AG04449 (cell line): ENCODE measurements at regions of chr11 and their contacts with region 1.

Region 1: DNA sequence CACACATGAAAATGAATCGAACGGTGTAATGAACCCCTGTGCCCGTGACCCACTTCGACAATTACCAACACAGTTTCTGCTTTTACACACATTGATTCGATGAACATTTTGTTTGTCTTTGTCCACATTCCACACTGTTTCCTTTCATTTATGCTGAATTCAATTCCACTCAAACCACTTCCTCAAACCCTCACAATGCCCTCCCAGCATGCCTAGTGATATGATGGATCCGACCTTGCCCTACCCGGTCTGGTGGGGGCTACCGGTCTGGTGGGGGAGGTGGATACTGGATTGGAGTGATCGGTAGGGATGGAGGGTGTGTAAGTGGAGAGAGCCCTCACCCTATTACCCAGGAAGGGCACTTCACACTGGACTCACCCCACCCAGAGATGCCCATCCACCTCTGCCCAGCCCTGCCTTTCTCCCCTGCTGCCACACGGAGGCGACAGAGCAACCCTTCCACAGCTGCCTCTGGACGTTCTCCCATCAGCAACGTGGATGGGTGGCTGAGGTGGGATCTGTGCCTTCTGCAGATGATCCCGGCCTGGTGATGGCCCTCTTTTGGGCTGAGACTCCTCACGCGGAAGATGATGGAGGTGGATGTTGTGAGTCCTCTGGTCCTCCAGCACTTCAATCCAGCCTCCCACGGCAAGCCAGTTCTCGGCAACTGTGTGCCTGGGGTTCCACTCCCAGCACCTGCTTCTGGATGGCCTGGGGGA is 33.0 kb upstream of the P2RY2 start:
- DNase-seq: no peak
- H3K4me3 ChIP-seq: no peak overlapping the region
- CTCF ChIP-seq: peak; percentile 96

Region 2: DNA sequence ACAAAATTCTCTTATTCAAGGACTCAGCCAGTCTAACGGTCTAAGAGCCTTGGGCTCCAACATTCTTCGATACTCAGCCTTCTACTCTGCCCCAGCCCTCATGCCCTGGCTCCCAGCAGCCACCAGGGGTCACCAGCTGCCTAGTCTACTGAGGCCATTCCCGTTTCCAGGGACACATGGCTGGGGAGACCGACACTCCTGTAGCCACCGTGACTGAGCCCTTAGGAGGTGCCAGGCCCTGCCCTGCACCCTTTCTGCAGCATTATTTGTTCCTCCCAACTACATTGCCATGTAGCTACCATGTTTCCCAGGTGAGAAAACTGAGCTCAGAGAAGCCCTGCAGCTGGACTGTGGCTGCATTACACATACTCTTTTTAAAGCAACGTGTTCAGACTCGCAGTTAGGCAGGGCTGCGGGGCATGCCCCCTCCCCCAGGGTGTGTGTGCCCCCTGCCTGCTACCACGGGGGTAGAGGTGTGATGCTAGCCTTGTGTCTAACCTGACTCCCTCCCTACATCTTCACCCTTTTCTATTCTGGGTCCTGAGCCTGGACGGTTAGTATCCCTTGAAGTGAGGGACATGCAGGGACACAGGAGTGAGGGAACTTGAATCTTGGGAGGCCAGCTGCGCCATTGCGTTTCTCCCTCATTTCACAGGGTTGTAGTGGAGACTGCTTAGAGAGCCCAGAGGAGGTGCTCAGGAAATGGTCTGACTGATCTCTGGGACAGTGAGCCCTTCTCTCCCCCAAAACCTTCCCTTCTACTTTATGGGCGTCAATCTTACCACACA is 353.4 kb before region 1 on chr11:
- CTCF ChIA-PET with region 1: interaction called, 324 read pairs
- POLR2A ChIA-PET with region 1: no interaction called
- DNase-seq: no peak
- H3K4me3 ChIP-seq: no peak overlapping the region
- CTCF ChIP-seq: peak; percentile 97

Region 3: DNA sequence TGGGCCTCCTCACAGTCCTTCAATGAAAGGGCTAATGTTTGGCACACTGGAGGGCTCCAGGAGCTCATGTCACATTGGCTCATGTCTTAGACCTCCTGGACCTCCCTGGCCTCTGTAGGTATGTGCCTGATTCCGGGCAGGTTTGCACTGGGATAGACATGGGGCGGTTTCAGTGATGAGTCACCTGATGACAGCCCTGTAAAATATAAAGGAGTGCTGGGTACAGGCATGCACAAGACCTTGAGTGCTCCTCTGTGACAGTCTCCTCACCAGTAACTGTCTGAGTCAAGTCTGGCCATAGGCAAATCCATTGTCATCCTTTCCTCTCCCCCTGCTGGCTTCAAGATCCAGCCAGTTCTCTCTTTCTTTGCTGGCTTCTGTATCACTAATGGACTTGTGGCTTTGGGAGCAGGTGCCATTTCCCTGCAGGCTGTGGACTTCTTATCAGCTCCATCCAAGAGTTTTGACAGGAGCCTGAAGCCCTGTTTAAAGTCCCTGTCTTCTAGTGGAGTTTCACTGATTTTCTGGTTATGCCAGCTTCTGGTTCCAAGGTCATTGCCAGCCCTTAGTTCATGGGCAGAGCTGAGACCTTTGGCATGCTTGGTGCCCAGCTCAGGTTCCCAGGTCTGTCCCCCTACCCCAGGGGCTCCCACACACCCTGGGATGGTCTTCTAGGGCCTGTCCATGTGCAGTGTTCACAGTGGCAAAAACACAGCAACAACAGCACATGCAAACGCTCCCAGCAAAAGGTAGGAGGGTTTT is 10.3 kb after region 1 on chr11:
- CTCF ChIA-PET with region 1: interaction called, 13 read pairs
- POLR2A ChIA-PET with region 1: no interaction called
- DNase-seq: no peak
- H3K4me3 ChIP-seq: no peak overlapping the region
- CTCF ChIP-seq: no peak

Region 4: DNA sequence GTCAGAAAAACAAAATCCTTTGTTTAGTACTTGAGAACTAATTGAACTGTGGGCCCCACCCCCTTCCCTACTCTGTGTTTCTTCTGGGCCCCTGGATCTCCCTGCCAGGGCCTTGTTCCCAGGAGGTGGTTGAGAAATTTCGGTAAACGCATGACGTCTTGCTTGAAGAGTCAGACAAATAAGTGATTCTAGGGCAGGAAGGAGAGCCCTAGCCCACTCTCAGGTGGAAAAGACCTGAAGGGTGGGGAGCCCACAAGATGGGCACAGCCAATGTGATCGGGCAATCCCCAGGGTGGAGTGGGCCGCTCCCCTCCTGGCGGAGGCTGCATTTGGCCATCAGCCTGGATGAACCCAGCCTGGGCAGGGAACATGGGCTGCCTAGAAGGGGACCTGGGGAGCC is 16.1 kb after region 1 on chr11:
- CTCF ChIA-PET with region 1: interaction called, 10 read pairs
- POLR2A ChIA-PET with region 1: no interaction called
- DNase-seq: no peak
- H3K4me3 ChIP-seq: no peak overlapping the region
- CTCF ChIP-seq: no peak

Region 5: DNA sequence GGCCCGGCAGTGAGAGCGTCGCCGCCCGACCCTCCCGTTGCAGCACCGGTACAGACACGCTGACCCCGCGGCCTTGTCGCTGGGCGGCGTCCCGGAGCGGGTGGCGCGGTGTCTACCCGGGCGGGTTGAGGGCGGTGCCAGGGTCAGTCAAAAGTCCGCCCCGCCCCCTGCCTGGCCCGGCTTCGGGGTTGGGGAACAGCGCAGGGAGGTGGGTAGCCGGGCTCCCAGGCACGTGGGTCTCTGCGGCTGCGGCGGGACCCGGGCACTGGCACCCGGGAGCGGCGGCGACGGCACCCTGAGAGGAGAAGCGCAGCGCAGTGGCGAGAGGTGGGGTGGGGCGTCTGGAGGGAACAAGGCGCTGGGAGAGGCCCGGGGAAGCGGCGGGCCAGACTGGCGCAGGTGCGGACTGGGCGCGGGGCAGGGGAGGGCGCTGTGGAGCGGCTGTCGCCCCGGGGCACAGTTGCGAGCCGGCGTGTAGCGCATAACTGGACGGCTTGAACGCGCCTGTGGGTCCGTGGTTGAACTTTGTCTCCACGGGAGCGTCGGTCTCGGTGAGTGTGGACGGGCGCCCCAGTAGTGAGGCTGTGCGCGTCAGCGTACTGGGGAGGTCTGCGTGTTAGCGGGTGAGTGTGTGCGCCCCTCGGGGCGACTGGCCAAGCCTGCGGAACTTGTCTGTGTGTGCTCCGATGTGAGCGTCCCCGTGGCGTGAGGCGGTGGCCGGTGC is 33.2 kb after region 1 on chr11 and contains the start of gene P2RY2:
- CTCF ChIA-PET with region 1: interaction called, 10 read pairs
- POLR2A ChIA-PET with region 1: no interaction called
- DNase-seq: no peak
- H3K4me3 ChIP-seq: peak within 1 kb of the TSS; percentile 44
- CTCF ChIP-seq: peak; percentile 62

Region 6: DNA sequence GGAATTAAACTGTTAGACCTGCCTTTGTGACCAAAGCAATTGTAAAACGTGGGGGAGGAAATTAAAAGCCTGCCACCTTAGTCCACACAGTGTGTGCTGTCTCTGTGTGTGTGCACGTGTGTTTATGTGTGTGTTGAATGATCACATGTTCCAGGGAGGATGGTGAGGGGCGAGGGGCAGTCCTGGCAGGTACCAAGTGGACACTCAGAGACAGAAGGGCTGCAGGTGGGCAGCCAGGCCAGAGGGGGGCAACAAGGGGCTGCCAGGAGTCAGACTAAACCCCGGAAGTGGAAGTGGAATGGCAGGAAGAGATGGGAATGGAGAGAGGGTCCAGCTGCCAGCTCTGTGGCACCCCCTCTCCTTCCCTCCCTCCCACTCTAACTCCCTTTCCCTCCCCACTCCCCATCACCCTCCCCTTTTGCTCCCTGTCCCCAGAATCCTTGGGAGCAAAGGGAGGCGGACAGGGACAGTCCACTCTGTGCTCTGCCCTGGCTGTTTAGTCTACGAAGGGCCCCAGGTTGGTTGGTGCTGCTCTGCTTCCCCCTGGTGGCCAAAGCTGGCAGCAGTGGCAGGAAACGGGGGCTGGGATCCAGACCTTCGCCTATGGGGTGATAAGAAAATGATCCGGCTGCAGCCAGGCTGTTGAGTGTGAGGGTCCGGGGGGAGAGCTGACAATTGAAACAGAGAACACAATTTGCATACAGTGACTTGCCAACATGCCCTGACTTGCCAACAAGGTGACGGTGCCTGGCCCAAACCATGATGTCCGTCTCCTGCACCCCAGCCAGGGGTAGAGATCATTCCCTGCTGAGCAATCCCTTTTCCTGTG is 57.4 kb after region 1 on chr11:
- CTCF ChIA-PET with region 1: interaction called, 210 read pairs
- POLR2A ChIA-PET with region 1: no interaction called
- DNase-seq: no peak
- H3K4me3 ChIP-seq: peak overlapping the region; percentile 13; the same call in 1 of the 2 replicates
- CTCF ChIP-seq: peak; percentile 94

Region 7: DNA sequence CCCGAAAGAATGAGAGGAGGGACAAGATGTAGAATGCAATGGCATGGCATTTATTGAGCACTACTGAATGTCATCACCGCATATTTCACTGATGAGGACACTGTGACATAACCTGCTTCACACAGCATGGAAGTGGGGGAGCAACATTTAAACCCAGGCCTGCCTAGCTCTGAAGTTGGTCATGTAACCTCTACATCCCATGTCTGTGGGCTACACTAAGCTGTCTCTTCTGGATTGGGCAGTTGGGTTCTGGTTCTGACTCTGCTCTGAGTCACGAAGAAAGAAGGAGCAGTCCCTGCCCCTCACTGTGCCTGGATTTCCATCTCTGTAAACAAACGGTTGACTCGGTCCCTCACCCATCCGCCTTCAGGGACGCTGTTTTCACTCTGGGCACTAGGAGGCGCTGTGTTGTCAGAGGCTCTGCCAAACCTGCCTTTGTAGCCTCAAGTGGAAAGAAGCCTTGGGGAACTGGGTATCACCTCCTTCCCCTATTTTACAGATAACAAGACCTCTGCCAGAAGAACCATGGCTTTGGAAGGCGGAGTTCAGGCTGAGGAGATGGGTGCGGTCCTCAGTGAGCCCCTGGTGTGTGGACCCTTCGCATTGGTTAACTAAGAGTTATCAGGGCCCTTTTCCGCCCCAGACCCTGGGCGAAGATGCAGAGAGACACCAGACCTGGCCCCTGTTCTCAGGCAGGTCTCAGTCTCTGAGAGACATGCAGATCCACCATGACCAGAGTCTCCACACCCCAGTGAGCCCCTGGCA is 110.3 kb after region 1 on chr11:
- CTCF ChIA-PET with region 1: interaction called, 179 read pairs
- POLR2A ChIA-PET with region 1: no interaction called
- DNase-seq: no peak
- H3K4me3 ChIP-seq: no peak overlapping the region
- CTCF ChIP-seq: peak; percentile 94